ENCODE measurements at regions of chr3 and their contacts with region 1.

Region 1: GRCh38 chr3:34683851-34684250 is 885.4 kb downstream of the PDCD6IP start:
- DNase-seq: peak in 4 of 5 donors; percentile 51 to 80 (median 60)
- H3K4me3 ChIP-seq: no peak overlapping the region
- H3K27ac ChIP-seq: no peak overlapping the region
- H3K4me1 ChIP-seq: no peaks in the 10 kb centered on the region
- H3K27me3 ChIP-seq: no peaks in the 10 kb centered on the region
- CTCF ChIP-seq: peak; percentile 66

Region 2: GRCh38 chr3:33883538-33883950 is 800.3 kb before region 1 on chr3:
- intact Hi-C with region 1: loop called (anchors 10 kb)
- DNase-seq: peak in 2 of 5 donors; percentile 72 to 77
- H3K4me3 ChIP-seq: peak overlapping the region in 2 of 3 donors; percentile 47 to 51
- H3K27ac ChIP-seq: no peak overlapping the region
- H3K4me1 ChIP-seq: peaks cover 0 to 8% (median 3%) of the 10 kb centered on the region in 3 donors
- H3K27me3 ChIP-seq: no peaks in the 10 kb centered on the region
- CTCF ChIP-seq: peak; percentile 57

Measured in kidney (tissue), 22 donors.